Body of pancreas (tissue), 4 donors: ENCODE measurements at regions of chr12 and their contacts with region 1.

Region 1: DNA sequence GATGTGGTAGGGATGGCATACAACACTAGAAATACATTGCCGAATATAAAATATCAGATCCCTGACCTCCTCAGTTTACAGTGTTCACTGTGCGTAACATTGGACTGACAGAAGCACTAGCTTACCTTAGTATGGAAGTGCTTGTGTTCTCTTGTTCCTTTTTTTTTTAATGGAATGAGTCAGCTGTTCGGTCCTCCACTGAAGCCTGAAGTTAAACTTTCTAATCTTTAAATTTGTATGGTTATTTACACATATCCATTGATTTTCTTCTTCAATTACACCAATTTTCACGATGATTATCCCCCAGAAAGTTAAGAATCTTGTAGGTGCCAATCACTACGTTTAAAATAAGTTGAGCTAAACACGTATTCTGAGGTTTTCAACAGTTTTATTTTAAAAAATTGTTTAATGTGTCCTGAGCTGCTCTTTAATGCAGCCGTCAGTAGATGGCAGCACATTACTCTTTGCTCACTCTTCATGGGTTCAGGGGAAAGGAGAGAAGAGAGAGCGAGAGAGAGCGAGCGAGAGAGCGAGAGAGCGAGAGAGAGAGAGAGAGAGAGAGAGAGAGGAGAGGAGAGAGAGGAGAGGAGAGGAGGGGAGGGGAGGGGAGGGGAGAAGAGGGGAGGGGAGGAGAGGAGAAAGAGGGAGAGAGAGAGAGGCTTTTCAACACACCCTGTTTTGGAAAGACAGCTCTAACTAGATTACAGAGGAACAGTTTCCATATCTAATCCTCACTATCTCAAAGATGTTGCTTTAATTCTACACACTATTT is 134.7 kb upstream of the SCAF11 start:
- DNase-seq: peak; percentile 57 to 68 (median 60)
- ATAC-seq: peak; percentile 93
- H3K4me3 ChIP-seq: no peak overlapping the region
- H3K27ac ChIP-seq: no peak overlapping the region
- H3K4me1 ChIP-seq: peaks cover 10% of the 10 kb centered on the region
- H3K27me3 ChIP-seq: no peaks in the 10 kb centered on the region
- CTCF ChIP-seq: peak; percentile 57 to 87 (median 79)
- POLR2A ChIP-seq: no peak

Region 2: GRCh38 chr12:45655201-45655600 is 469.8 kb before region 1 on chr12:
- intact Hi-C with region 1: no loop called
- DNase-seq: peak in 2 of 4 donors; percentile 11 to 16
- ATAC-seq: no peak
- H3K4me3 ChIP-seq: no peak overlapping the region
- H3K27ac ChIP-seq: no peak overlapping the region
- H3K4me1 ChIP-seq: no peaks in the 10 kb centered on the region
- H3K27me3 ChIP-seq: no peaks in the 10 kb centered on the region
- CTCF ChIP-seq: no peak
- POLR2A ChIP-seq: no peak

Region 3: DNA sequence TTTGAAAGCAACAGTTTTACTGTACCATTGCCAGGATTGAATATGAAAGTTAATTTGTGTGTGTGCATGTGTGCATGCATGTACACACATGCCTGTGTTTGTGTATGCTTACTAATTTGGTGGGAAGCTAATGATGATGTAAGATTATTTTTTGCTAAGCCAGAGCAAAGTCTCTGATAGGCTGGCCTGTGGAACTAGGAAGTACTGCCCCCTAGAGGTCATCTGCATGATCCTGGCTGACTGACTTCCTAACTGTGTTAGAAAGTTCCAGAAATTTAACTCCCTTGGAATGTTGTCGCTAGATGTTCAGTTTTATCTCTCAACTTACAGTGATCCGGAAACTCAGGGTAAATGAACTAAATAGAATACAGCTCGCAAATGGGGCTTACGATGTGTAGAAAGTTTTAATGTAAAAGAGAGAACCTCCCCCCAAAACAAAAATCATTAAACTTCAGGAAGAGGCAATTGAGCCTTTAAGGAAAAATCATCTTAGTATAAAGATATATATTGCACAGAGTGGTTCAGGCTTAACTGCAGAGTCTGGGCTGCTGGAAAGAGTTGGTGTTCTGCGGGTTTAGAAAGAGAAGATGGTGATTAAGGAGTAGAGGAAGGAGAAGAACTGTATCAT is 178.1 kb after region 1 on chr12:
- intact Hi-C with region 1: loop called (anchors 10 kb)
- DNase-seq: peak; percentile 61 to 73 (median 62)
- ATAC-seq: peak; percentile 81
- H3K4me3 ChIP-seq: no peak overlapping the region
- H3K27ac ChIP-seq: no peak overlapping the region
- H3K4me1 ChIP-seq: no peaks in the 10 kb centered on the region
- H3K27me3 ChIP-seq: no peaks in the 10 kb centered on the region
- CTCF ChIP-seq: peak; percentile 51 to 79 (median 72)
- POLR2A ChIP-seq: no peak

Region 4: DNA sequence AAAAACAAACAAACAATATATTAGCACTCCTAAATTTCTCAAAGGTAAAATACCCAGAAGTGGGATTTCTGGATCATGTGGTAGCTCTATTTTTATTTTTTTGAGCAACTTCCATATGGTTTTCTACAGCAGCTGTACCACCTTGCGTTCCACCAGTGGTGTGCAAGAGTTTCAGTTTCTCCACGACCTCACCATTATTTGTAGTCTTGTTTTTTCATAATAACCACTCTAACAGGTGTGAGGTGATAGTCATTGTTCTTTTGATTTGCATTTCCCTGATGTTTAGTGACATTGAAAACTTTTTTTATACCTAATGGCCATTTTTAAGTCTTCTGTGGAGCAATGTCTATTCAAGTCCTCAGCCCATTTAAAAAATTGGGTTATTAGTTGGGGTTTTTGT is 374.9 kb after region 1 on chr12:
- intact Hi-C with region 1: no loop called
- DNase-seq: no peak
- ATAC-seq: no peak
- H3K4me3 ChIP-seq: no peak overlapping the region
- H3K27ac ChIP-seq: no peak overlapping the region
- H3K4me1 ChIP-seq: no peaks in the 10 kb centered on the region
- H3K27me3 ChIP-seq: no peaks in the 10 kb centered on the region
- CTCF ChIP-seq: no peak
- POLR2A ChIP-seq: no peak

Region 5: DNA sequence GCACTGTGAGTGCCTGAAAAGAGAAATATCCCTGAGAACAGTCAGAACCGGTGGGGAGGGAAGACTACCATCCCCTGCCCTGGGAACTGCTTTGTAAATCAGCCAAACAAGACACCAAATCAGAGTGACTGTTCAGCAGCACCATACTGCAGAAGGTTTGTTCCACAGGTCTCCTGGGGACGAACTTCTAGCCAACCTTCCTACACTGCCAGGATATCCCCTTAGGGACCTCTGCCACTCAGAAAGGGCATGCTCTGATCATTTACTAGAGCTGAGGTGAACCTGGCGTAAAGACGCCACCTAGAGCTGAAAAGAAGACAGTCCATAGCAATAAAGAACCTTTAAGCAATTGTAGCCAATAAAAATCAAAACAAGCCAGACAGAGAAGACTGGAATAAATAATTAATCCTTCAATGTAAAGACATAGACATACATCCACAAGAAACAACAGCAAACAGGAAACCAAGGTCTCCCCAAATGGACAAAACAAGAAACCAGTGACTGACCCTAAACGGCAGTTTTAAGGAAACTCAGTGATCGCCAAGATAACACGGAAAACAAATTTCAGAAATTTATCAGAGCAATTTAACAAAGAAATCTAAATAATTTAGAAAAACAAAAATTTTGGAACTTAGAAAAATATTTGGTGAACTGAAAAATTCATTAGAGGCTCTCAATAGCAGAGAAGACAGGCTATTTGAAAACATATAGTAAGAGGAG is 1182.8 kb after region 1 on chr12:
- intact Hi-C with region 1: no loop called
- DNase-seq: peak; percentile 50 to 71 (median 61)
- ATAC-seq: peak; percentile 90
- H3K4me3 ChIP-seq: no peak overlapping the region
- H3K27ac ChIP-seq: no peak overlapping the region
- H3K4me1 ChIP-seq: peaks cover 13% of the 10 kb centered on the region
- H3K27me3 ChIP-seq: no peaks in the 10 kb centered on the region
- CTCF ChIP-seq: peak; percentile 46 to 86 (median 81)
- POLR2A ChIP-seq: no peak